Activated CD4-positive, alpha-beta T cell treated with anti-CD3 and anti-CD28 coated beads, Interleukin-2, amount 10 ng/mL, durations not matched to agents 24 days and 14 days (primary cell): ENCODE measurements at regions of chr3 and their contacts with region 1.

Region 1: DNA sequence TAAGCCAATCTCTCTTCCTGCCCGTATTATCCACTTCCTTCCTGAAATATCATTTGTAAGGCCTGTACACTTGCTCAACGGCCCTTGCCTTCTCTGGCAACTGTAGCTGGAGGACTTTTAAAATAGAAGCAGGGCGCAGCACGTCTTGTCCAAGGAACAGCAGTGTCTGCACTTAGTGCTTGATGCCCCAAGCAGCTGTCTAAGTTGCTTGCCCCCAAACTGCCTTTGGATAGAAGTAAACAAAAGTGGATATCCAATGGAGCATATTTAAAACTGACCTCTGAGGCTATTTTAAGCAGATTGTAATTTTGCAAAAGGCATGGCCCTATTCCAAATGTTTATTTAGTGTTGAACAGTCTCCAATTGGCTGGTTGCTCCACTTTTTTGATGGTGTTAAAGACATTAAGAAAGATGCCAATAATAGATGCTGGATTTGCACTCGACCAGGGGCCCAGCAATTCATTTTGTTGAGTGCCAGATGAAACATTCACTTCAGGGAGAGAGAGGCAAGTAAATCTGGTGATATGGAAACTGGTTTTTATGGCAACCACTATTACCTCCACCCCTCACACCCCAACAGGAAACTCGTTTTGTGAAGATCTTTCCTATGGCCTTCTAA is 526.8 kb upstream of the TBL1XR1 start:
- DNase-seq: no peak
- H3K4me3 Mint-ChIP-seq: no peak overlapping the region
- H3K27ac Mint-ChIP-seq: no peak overlapping the region
- H3K4me1 Mint-ChIP-seq: no peaks in the 10 kb centered on the region
- H3K27me3 Mint-ChIP-seq: no peaks in the 10 kb centered on the region

Region 2: DNA sequence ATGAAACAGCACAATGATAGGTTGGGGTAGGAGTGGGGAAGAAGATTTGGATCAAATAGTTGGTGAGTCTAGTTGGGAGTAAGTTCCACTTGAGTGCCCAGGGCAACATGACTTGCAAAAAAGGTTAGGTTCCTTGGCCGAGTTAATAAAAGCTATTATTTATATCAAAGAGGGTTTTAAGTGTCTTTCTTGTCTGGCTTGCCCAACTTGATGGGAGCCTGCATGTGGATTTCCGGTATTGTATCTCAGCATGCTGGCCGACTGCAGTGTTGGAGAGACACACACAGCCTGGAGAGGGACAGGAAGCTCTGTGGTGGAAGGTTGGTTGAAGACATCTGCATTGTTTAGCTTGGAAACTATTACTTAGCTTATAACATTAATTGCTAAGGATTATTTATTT is 77.4 kb before region 1 on chr3:
- intact Hi-C with region 1: loop called (anchors 5 kb)
- DNase-seq: peak; percentile 76
- H3K4me3 Mint-ChIP-seq: no peak overlapping the region
- H3K27ac Mint-ChIP-seq: no peak overlapping the region
- H3K4me1 Mint-ChIP-seq: peaks cover 33% of the 10 kb centered on the region
- H3K27me3 Mint-ChIP-seq: no peaks in the 10 kb centered on the region